Caco-2 (cell line): ENCODE measurements at regions of chr4 and their contacts with region 1.

Region 1: DNA sequence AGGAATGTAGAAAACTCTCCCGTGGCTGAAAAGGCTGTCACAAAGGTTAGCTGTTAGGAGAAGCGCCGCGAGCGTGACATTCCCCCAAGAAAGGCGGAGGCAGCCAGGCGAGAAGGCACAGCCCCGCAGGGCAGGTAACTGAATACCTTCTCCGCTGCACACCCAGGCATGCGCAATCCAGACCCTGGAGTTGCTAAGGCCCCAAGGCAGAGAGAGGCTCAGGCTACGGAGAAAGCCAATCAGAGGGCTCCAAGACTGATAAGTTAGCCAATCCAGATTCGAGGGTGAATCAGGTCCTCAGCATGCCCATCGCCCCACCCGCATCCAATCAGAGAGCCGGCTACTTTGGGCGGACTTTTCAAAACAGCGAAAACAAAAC is 485 bp upstream of the CCNG2 start:
- DNase-seq: peak; percentile 97 to 99
- H3K4me3 ChIP-seq: peak overlapping the region; percentile 63
- H3K4me3 Mint-ChIP-seq: peak overlapping the region; percentile 98
- H3K27ac Mint-ChIP-seq: peak overlapping the region; percentile 99
- H3K4me1 ChIP-seq: no peaks in the 10 kb centered on the region
- H3K4me1 Mint-ChIP-seq: peaks cover 10% of the 10 kb centered on the region
- H3K27me3 ChIP-seq: no peaks in the 10 kb centered on the region
- H3K27me3 Mint-ChIP-seq: no peaks in the 10 kb centered on the region
- CTCF ChIP-seq: no peak

Region 2: DNA sequence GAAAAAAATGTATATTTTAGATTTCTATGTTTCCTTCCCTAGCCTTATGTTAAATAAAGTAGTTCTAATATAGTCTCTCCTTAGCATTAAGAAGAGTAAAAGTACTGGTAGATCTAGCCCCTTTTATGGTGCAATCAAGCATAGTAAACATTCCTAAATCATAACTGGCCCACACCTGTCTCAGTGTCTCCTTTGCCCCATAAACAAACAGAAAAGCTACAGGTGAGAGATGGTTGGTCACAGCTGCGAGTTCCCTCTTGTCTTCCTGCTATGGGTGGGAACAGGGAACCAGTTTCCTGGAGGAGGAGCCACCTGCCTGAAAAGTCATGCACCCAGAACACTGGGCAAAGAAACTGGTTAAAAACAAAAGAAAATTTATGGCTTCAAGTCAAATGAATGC is 275.1 kb before region 1 on chr4:
- CTCF ChIA-PET with region 1: no interaction called
- POLR2A ChIA-PET with region 1: no interaction called
- intact Hi-C with region 1: no loop called
- DNase-seq: peak; percentile 57 to 72
- H3K4me3 ChIP-seq: no peak overlapping the region
- H3K4me3 Mint-ChIP-seq: no peak overlapping the region
- H3K27ac Mint-ChIP-seq: no peak overlapping the region
- H3K4me1 ChIP-seq: peaks cover 10% of the 10 kb centered on the region
- H3K4me1 Mint-ChIP-seq: peaks cover 14% of the 10 kb centered on the region
- H3K27me3 ChIP-seq: no peaks in the 10 kb centered on the region
- H3K27me3 Mint-ChIP-seq: no peaks in the 10 kb centered on the region
- CTCF ChIP-seq: no peak

Region 3: GRCh38 chr4:77052352-77052751 is 104.2 kb before region 1 on chr4:
- CTCF ChIA-PET with region 1: no interaction called
- POLR2A ChIA-PET with region 1: no interaction called
- intact Hi-C with region 1: loop called (anchors 5 kb)
- DNase-seq: peak; percentile 61 to 70
- H3K4me3 ChIP-seq: no peak overlapping the region
- H3K4me3 Mint-ChIP-seq: no peak overlapping the region
- H3K27ac Mint-ChIP-seq: peak overlapping the region; percentile 32
- H3K4me1 ChIP-seq: no peaks in the 10 kb centered on the region
- H3K4me1 Mint-ChIP-seq: no peaks in the 10 kb centered on the region
- H3K27me3 ChIP-seq: no peaks in the 10 kb centered on the region
- H3K27me3 Mint-ChIP-seq: no peaks in the 10 kb centered on the region
- CTCF ChIP-seq: peak; percentile 49 to 77

Region 4: DNA sequence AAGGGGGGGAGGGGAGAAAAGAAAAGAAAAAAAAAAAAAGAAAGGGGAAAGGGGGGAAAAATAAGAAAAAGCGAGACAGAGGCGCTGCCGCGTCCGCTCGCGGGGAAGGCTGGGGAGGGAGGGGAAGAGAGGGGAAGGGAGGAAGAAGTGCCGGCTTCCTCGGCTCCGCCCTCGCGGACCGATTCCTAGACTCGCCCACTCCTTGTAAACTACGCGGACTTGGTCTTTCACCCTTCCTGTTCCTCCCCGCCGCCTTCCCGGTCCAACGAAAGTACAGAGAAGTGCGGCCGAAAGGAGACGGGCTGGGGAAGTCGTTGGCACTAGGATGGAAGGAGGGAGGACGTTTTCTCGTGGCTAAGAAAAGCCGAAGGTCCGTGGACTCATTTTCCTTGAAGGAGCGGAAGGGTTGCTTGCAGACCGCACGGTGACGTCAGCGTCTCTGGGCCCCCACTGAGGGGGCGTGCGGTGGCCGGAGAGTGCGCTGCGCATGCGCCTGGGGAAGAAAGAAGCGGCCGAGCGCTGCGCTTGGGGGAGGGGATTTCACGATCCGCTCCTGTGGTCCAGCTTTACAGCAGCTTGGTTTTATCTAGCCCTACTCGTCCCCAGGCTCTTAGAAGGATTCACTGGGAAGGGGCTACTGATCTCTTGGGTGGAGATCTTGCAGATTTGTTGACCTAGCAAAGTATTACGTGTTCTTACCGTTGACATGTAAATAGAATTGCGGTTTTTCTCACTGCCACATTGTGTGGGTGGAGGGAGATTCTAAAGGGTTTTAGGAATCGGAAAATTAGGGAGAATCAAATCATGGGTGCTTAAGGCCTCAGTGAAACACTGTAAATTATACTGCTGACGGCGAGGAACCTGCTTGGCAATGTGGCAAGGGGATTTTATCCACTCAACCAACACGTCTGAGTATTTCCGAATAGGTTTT is 80.4 kb before region 1 on chr4 and contains the start of gene CCNI:
- CTCF ChIA-PET with region 1: no interaction called
- POLR2A ChIA-PET with region 1: no interaction called
- intact Hi-C with region 1: loop called (anchors 1 kb)
- DNase-seq: peak; percentile 94 to 95
- H3K4me3 ChIP-seq: peak within 1 kb of the TSS; percentile 66
- H3K4me3 Mint-ChIP-seq: no peak within 1 kb of the TSS
- H3K27ac Mint-ChIP-seq: no peak within 1 kb of the TSS
- H3K4me1 ChIP-seq: peaks cover 20% of the 10 kb centered on the region
- H3K4me1 Mint-ChIP-seq: peaks cover 6% of the 10 kb centered on the region
- H3K27me3 ChIP-seq: no peaks in the 10 kb centered on the region
- H3K27me3 Mint-ChIP-seq: no peaks in the 10 kb centered on the region
- CTCF ChIP-seq: no peak
- total RNA-seq, gene CCNI: 153 and 164 TPM in 2 replicates

Region 5: GRCh38 chr4:77095101-77095821 is 61.3 kb before region 1 on chr4:
- CTCF ChIA-PET with region 1: no interaction called
- POLR2A ChIA-PET with region 1: no interaction called
- intact Hi-C with region 1: loop called (anchors 1 kb)
- DNase-seq: peak; percentile 69 to 72
- H3K4me3 ChIP-seq: no peak overlapping the region
- H3K4me3 Mint-ChIP-seq: no peak overlapping the region
- H3K27ac Mint-ChIP-seq: no peak overlapping the region
- H3K4me1 ChIP-seq: no peaks in the 10 kb centered on the region
- H3K4me1 Mint-ChIP-seq: no peaks in the 10 kb centered on the region
- H3K27me3 ChIP-seq: no peaks in the 10 kb centered on the region
- H3K27me3 Mint-ChIP-seq: no peaks in the 10 kb centered on the region
- CTCF ChIP-seq: peak; percentile 79 to 80

Region 6: DNA sequence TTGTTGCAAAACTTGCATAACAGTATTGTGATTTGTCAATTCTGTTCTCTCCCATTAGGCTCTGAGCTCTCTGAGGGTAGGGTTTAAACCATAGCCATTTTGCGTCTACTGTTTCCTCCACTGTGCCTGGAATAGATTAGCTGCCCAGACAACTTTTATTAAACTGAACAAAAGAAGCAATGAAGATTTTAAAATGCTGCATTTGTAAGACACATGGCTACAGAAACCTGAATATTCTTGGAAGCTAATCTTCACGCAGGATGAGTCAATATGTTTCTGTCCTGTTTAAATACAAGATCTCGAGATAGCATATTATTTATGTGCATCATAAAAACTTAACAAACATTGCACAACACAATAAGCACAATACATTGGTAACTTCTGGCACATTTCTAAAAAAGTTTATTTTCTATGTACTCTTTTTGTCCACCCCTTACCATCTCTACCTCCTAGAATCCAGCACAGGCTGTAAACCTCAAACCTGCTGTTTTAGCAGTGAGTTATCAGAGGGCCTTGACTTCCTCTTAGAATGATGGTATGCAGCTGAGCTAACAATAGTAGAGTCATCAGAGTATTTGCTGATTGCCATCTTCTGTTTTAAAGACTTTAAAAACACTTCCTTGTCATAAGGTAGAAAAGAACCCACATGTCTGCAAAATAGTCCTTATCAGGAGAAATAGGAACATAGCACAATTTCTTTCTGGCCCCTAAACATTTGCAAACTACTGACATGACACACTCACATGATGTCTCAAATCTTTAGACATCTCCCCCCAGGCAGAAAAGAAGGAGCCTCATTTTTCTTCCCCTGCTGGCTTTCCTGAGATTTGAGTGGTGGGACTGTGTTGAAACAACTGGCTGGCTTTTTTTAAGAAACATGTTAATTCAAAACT is 10.1 kb before region 1 on chr4:
- CTCF ChIA-PET with region 1: interaction called, 3 read pairs
- POLR2A ChIA-PET with region 1: interaction called, 8 read pairs
- intact Hi-C with region 1: loop called (anchors 1 kb)
- DNase-seq: peak in 1 of 2 experiments; percentile 42
- H3K4me3 ChIP-seq: no peak overlapping the region
- H3K4me3 Mint-ChIP-seq: peak overlapping the region; percentile 62
- H3K27ac Mint-ChIP-seq: peak overlapping the region; percentile 64
- H3K4me1 ChIP-seq: peaks cover 32% of the 10 kb centered on the region
- H3K4me1 Mint-ChIP-seq: peaks cover 15% of the 10 kb centered on the region
- H3K27me3 ChIP-seq: no peaks in the 10 kb centered on the region
- H3K27me3 Mint-ChIP-seq: no peaks in the 10 kb centered on the region
- CTCF ChIP-seq: no peak